Pancreas (tissue), 10 donors: ENCODE measurements at regions of chr1 and their contacts with region 1.

Region 1: GRCh38 chr1:40849801-40850592 is 12.2 kb downstream of the CITED4 start:
- DNase-seq: peak in 5 of 6 donors; percentile 52 to 84 (median 68)
- ATAC-seq: peak; percentile 78 to 90 (median 82)
- H3K4me3 ChIP-seq: no peak overlapping the region
- H3K27ac ChIP-seq: peak overlapping the region in 1 of 4 donors; percentile 65
- H3K4me1 ChIP-seq: peaks cover 9 to 20% (median 9%) of the 10 kb centered on the region in 3 donors
- H3K27me3 ChIP-seq: no peaks in the 10 kb centered on the region
- CTCF ChIP-seq: peak; percentile 72 to 94 (median 86)

Region 2: GRCh38 chr1:40625066-40625465 is 224.9 kb before region 1 on chr1:
- intact Hi-C with region 1: loop called in 1 of 3 experiments (anchors 10 kb)
- DNase-seq: peak in 5 of 6 donors; percentile 30 to 67 (median 51)
- ATAC-seq: peak; percentile 69 to 97 (median 92)
- H3K4me3 ChIP-seq: no peak overlapping the region
- H3K27ac ChIP-seq: no peak overlapping the region
- H3K4me1 ChIP-seq: peaks cover 0 to 4% (median 0%) of the 10 kb centered on the region in 3 donors
- H3K27me3 ChIP-seq: no peaks in the 10 kb centered on the region
- CTCF ChIP-seq: peak in 3 of 4 donors; percentile 15 to 33 (median 23)